ENCODE measurements at regions of chr13 and their contacts with region 1.

Region 1: GRCh38 chr13:102680842-102681740 is 13.8 kb downstream of the METTL21C start:
- DNase-seq: peak in 3 of 9 experiments; percentile 10 to 45 (median 22)
- ATAC-seq: peak; percentile 68
- H3K4me3 ChIP-seq: no peak overlapping the region
- H3K4me3 Mint-ChIP-seq: no peak overlapping the region
- H3K27ac ChIP-seq: peak overlapping the region in 1 of 2 experiments; percentile 14
- H3K27ac Mint-ChIP-seq: peak overlapping the region; percentile 80
- H3K4me1 ChIP-seq: peaks cover 1% of the 10 kb centered on the region
- H3K4me1 Mint-ChIP-seq: peaks cover 29% of the 10 kb centered on the region
- H3K27me3 ChIP-seq: no peaks in the 10 kb centered on the region
- H3K27me3 Mint-ChIP-seq: no peaks in the 10 kb centered on the region
- CTCF ChIP-seq: no peak

Region 2: GRCh38 chr13:101267656-101268055 is 1413.4 kb before region 1 on chr13:
- CTCF ChIA-PET with region 1: no interaction called
- POLR2A ChIA-PET with region 1: no interaction called
- intact Hi-C with region 1: no loop called
- DNase-seq: no peak
- ATAC-seq: no peak
- H3K4me3 ChIP-seq: no peak overlapping the region
- H3K4me3 Mint-ChIP-seq: no peak overlapping the region
- H3K27ac ChIP-seq: no peak overlapping the region
- H3K27ac Mint-ChIP-seq: no peak overlapping the region
- H3K4me1 ChIP-seq: no peaks in the 10 kb centered on the region
- H3K4me1 Mint-ChIP-seq: no peaks in the 10 kb centered on the region
- H3K27me3 ChIP-seq: no peaks in the 10 kb centered on the region
- H3K27me3 Mint-ChIP-seq: no peaks in the 10 kb centered on the region
- CTCF ChIP-seq: no peak

Region 3: GRCh38 chr13:102642475-102642874 is 38.6 kb before region 1 on chr13:
- CTCF ChIA-PET with region 1: no interaction called
- POLR2A ChIA-PET with region 1: interaction called, 4 read pairs
- intact Hi-C with region 1: loop called in 1 of 2 experiments (anchors 5 kb)
- DNase-seq: no peak
- ATAC-seq: no peak
- H3K4me3 ChIP-seq: no peak overlapping the region
- H3K4me3 Mint-ChIP-seq: no peak overlapping the region
- H3K27ac ChIP-seq: no peak overlapping the region
- H3K27ac Mint-ChIP-seq: peak overlapping the region; percentile 20
- H3K4me1 ChIP-seq: no peaks in the 10 kb centered on the region
- H3K4me1 Mint-ChIP-seq: peaks cover 5% of the 10 kb centered on the region
- H3K27me3 ChIP-seq: no peaks in the 10 kb centered on the region
- H3K27me3 Mint-ChIP-seq: no peaks in the 10 kb centered on the region
- CTCF ChIP-seq: no peak

Region 4: GRCh38 chr13:102773441-102774215 is 92.5 kb after region 1 on chr13 and contains the start of gene TEX30:
- CTCF ChIA-PET with region 1: no interaction called
- POLR2A ChIA-PET with region 1: no interaction called
- intact Hi-C with region 1: loop called in 1 of 2 experiments (anchors 5 kb)
- DNase-seq: peak; percentile 75 to 93 (median 86)
- ATAC-seq: peak; percentile 96
- H3K4me3 ChIP-seq: peak within 1 kb of the TSS; percentile 66 to 70
- H3K4me3 Mint-ChIP-seq: peak within 1 kb of the TSS; percentile 88
- H3K27ac ChIP-seq: peak within 1 kb of the TSS; percentile 70 to 82
- H3K27ac Mint-ChIP-seq: peak within 1 kb of the TSS; percentile 91
- H3K4me1 ChIP-seq: peaks cover 15% of the 10 kb centered on the region
- H3K4me1 Mint-ChIP-seq: peaks cover 34% of the 10 kb centered on the region
- H3K27me3 ChIP-seq: no peaks in the 10 kb centered on the region
- H3K27me3 Mint-ChIP-seq: no peaks in the 10 kb centered on the region
- CTCF ChIP-seq: no peak
- total RNA-seq, gene TEX30: 10.4 to 10.9 TPM